Right ventricle myocardium inferior (tissue), 1 donor: ENCODE measurements at regions of chr10 and their contacts with region 1.

Region 1: GRCh38 chr10:6088721-6089390 is at the start of gene RBM17:
- DNase-seq: peak; percentile 98
- ATAC-seq: peak; percentile 95
- total RNA-seq, gene RBM17: 65.7 TPM

Region 2: DNA sequence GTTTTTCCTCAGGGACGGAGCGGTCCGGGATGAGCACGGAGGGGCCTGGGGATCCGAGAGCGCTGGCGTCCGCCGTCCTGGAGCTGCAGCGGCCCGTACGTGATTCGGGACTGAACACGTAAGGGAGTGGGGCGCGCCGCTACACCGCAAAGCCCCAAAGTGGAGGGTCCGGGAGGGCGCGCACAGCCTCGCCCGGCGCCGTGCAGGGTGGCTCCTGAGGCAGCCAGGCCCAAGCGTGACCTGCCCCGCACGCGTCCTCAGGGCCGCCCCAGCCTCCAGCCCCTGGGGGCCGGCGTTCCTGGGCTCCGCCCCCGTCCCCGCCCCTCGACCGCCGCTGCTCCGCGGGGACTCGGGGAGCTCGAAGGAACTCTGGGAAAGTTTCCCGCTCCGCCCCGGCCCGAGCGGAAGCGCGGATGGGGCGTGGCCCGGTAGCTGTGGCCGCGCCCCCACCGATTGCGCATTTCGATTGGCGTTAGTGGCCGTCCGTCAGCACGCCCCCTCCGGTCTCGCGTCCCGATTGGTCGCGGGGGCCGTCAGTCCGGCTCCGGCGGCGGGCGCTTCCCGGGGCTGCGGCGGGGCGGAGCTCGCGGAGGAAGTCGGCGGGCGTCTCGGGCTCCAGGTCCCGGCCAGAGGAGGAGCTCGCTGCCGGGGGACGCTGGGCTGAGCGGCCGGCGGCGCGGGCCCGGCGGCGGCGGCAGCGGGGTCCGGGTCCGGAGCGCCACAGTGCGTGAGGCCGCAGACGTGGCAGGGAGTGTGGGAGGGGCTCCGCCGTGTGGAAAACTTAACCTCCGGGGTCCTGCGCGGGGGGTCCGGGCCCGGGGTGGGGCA is 199.0 kb before region 1 on chr10 and contains the starts of genes ANKRD16 and FBH1:
- intact Hi-C with region 1: loop called (anchors 2 kb)
- DNase-seq: peak; percentile 98
- ATAC-seq: peak; percentile 97
- total RNA-seq, gene ANKRD16: 2.5 TPM
- total RNA-seq, gene FBH1: 78.1 TPM

Region 3: GRCh38 chr10:5948999-5949759 is 139.7 kb before region 1 on chr10:
- intact Hi-C with region 1: loop called (anchors 10 kb)
- DNase-seq: no peak
- ATAC-seq: peak; percentile 32

Region 4: DNA sequence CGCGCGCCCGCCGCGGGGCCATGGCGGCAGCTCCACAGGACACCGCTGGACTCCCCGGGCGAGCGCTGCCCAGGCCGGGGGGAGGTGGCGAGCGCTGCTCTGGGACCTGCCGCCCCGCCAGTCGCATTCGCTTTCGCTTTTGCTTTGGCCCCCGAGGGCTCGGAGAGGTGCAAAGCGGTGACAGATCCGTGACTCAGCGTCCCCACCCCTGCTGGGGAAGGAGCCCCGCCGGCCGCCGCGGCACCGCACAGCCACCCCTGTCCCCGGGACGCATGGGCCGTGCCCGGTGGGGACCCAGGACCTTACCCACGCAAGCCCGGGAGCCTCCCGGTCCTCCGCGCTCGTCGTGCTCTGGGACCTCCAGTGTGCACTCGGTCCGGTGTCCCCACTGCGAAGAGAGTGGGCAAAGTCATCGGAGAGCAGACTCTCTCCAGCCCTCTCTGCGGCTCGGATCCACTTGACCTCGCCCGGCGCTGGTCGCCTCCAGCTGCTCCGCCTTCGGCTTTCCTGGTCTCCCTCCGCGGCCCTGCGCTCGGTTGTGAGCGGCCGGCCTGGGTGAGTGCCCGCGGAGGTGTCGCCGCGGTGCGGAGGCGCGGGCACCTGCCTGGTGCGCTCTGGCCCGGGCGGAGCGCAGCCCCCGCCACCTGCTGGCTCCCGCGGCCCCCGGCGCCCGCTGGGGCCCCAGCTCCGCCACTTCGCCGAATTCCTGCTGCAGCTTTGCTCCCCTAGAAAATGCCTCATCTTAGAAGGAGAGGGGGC is 111.2 kb before region 1 on chr10 and contains the start of gene IL15RA:
- intact Hi-C with region 1: loop called (anchors 10 kb)
- DNase-seq: peak; percentile 87
- ATAC-seq: peak; percentile 65
- total RNA-seq, gene IL15RA: 11.6 TPM

Region 5: DNA sequence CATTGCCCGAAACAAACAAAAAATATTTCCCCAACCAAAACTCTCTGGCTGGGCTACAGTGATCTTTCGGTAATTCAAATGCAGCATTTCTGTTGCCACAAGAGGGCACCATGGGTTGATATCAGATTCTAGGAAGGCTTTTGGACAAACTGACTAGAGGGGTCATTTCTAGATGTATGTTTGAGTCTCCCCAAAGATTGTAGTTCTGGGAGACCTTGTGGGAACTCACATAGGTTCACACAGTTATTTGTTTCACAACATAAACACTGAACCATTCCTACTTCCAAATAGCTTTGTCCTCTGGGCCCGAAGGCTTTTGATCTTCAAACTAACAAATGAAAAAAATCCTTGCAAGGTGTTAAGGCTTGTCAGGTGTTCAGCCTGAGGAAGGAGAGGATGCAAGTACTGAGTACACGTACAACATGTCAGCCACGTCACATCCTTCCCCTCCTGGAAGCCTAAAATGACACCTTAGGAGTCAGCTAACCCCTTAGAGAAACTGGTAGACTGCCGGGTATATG is 74.6 kb before region 1 on chr10:
- intact Hi-C with region 1: loop called (anchors 2 kb)
- DNase-seq: no peak
- ATAC-seq: peak; percentile 29

Region 6: GRCh38 chr10:6056411-6057135 is 32.3 kb before region 1 on chr10:
- intact Hi-C with region 1: loop called (anchors 2 kb)
- DNase-seq: no peak
- ATAC-seq: no peak

Region 7: GRCh38 chr10:6182454-6183098 is 93.7 kb after region 1 on chr10:
- intact Hi-C with region 1: no loop called
- DNase-seq: no peak
- ATAC-seq: peak; percentile 49

Region 8: DNA sequence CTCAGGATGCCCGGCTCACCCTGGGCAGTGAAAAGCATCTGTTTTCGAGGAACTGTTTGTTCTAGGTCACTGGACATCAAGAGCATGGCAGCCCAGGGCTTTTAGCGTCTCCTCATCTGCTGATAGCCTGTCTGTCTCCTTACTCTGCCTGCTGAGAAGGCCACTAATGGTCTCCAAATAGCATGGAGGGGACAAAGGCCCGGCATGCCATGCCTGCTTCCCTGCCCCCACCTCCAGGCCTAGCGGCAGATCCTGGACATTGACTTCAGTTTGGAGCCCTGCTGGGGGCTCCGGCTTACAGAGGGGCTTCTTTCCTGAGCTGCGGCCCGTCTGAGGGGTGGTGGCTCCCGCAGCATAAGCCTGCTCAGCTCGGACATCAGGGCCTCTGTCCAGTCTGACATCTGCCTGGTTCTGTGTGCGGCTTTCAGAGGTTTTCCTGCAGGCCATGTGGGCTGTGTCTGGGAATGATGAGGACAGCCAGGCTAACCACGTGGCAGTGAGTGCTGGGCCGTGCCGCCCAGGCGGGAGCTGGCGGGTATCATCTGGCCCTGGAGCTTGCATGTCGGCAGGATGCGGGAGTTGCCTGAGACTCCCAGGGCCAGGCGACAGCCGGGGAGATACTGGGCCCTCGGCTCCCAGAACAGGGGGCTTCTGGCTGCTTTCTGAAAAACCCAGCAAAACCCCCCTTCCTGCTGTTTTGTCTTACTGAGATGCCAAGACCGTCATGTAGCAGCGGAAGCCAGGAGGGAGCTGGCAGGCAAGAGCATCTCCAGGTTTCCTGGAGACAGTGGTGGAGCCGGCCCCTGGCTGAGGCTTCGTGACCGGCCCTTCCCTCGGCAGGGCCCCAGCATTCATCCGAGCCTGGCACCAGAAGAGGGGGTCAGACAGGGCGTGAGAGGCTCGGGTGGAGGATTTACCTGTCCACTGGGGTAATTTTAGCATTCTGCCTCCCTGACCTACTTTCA is 123.1 kb after region 1 on chr10:
- intact Hi-C with region 1: no loop called
- DNase-seq: no peak
- ATAC-seq: peak; percentile 87

Region 9: GRCh38 chr10:6401562-6402348 is 312.9 kb after region 1 on chr10:
- intact Hi-C with region 1: loop called (anchors 2 kb)
- DNase-seq: peak; percentile 82
- ATAC-seq: peak; percentile 96